Prostate gland (tissue), 2 donors: ENCODE measurements at regions of chr6 and their contacts with region 1.

Region 1: GRCh38 chr6:158972241-158973233 is 27.5 kb downstream of the RSPH3 start:
- DNase-seq: peak; percentile 15
- H3K4me3 ChIP-seq: no peak overlapping the region
- H3K27ac ChIP-seq: no peak overlapping the region
- H3K4me1 ChIP-seq: no peaks in the 10 kb centered on the region
- H3K27me3 ChIP-seq: no peaks in the 10 kb centered on the region
- CTCF ChIP-seq: peak; percentile 23 to 86 (median 72)
- POLR2A ChIP-seq: no peak

Region 2: DNA sequence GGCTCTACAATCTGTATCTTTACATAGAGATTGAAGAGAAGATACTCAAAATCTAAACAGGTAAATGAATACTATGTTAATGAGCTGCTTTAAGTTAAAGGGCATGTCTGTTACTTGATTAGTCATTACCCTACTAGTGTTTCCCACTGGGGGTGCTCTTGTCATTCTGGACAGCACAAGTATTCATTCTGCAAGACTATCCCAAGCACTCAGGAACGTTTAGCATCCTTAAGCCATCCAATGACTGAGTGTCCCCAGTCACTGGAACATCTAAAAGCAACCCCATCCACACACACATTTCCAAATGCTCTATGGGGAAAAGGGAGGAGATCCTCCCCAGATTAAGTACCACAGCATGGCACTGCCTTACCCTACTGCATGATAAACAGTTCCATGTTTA is 179.1 kb before region 1 on chr6:
- intact Hi-C with region 1: loop called (anchors 10 kb)
- DNase-seq: no peak
- H3K4me3 ChIP-seq: no peak overlapping the region
- H3K27ac ChIP-seq: no peak overlapping the region
- H3K4me1 ChIP-seq: peaks cover 2% of the 10 kb centered on the region
- H3K27me3 ChIP-seq: no peaks in the 10 kb centered on the region
- CTCF ChIP-seq: peak in 2 of 4 experiments; percentile 18 to 20
- POLR2A ChIP-seq: no peak

Region 3: GRCh38 chr6:159134701-159135364 is 162.3 kb after region 1 on chr6:
- intact Hi-C with region 1: no loop called
- DNase-seq: peak; percentile 53
- H3K4me3 ChIP-seq: no peak overlapping the region
- H3K27ac ChIP-seq: no peak overlapping the region
- H3K4me1 ChIP-seq: no peaks in the 10 kb centered on the region
- H3K27me3 ChIP-seq: no peaks in the 10 kb centered on the region
- CTCF ChIP-seq: peak; percentile 60 to 88 (median 78)
- POLR2A ChIP-seq: no peak

Region 4: GRCh38 chr6:159193923-159194322 is 221.4 kb after region 1 on chr6:
- intact Hi-C with region 1: no loop called
- DNase-seq: no peak
- H3K4me3 ChIP-seq: no peak overlapping the region
- H3K27ac ChIP-seq: no peak overlapping the region
- H3K4me1 ChIP-seq: no peaks in the 10 kb centered on the region
- H3K27me3 ChIP-seq: no peaks in the 10 kb centered on the region
- CTCF ChIP-seq: no peak
- POLR2A ChIP-seq: no peak

Region 5: GRCh38 chr6:159217595-159218275 is 245.2 kb after region 1 on chr6:
- intact Hi-C with region 1: no loop called
- DNase-seq: no peak
- H3K4me3 ChIP-seq: no peak overlapping the region
- H3K27ac ChIP-seq: no peak overlapping the region
- H3K4me1 ChIP-seq: no peaks in the 10 kb centered on the region
- H3K27me3 ChIP-seq: no peaks in the 10 kb centered on the region
- CTCF ChIP-seq: no peak
- POLR2A ChIP-seq: no peak

Region 6: GRCh38 chr6:159679091-159680077 is 706.8 kb after region 1 on chr6:
- intact Hi-C with region 1: no loop called
- DNase-seq: no peak
- H3K4me3 ChIP-seq: no peak overlapping the region
- H3K27ac ChIP-seq: no peak overlapping the region
- H3K4me1 ChIP-seq: no peaks in the 10 kb centered on the region
- H3K27me3 ChIP-seq: no peaks in the 10 kb centered on the region
- CTCF ChIP-seq: no peak
- POLR2A ChIP-seq: no peak